A549 (cell line): ENCODE measurements at regions of chr2 and their contacts with region 1.

Region 1: GRCh38 chr2:117814417-117815264 is at the start of gene DDX18:
- DNase-seq: peak; percentile 50 to 98
- ATAC-seq: peak; percentile 99
- H3K4me3 ChIP-seq: peak within 1 kb of the TSS; percentile 85
- H3K27ac ChIP-seq: peak within 1 kb of the TSS; percentile 86 to 88
- H3K4me1 ChIP-seq: peaks cover 15% of the 10 kb centered on the region; the same call in 2 of the 3 replicates
- CTCF ChIP-seq: peak; percentile 99
- EP300 ChIP-seq: no peak
- POLR2A ChIP-seq: peak; percentile 75
- RAD21 ChIP-seq: peak; percentile 79 to 84
- polyA plus RNA-seq, gene DDX18: 106 and 115 TPM in 2 replicates

Region 2: DNA sequence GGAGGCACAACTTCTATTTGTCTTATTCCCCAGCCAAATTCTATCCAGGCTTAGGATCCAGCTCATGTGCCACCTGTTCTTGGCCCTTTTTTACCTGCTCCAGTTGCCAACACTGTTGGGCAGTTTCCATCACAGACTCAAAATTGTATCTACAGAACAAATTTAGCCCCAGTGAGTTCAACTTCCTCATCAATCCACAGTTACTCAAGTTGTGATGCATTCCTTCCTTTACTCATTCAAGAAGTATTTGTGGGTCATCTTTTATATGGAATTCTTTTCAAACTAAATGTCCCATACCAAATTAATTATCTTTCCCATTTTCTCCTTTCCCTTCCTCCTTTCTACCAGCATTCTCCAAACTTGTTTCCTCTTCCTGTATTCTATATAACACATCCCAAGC is 12.8 kb before region 1 on chr2:
- CTCF ChIA-PET with region 1: interaction called, 17 read pairs
- POLR2A ChIA-PET with region 1: no interaction called
- DNase-seq: no peak
- ATAC-seq: no peak
- H3K4me3 ChIP-seq: no peak overlapping the region
- H3K27ac ChIP-seq: no peak overlapping the region
- H3K4me1 ChIP-seq: no peaks in the 10 kb centered on the region
- CTCF ChIP-seq: no peak
- EP300 ChIP-seq: no peak
- POLR2A ChIP-seq: no peak
- RAD21 ChIP-seq: no peak

Region 3: GRCh38 chr2:117835990-117836760 is 21.5 kb after region 1 on chr2:
- CTCF ChIA-PET with region 1: interaction called, 37 read pairs
- POLR2A ChIA-PET with region 1: no interaction called
- DNase-seq: peak; percentile 34 to 42
- ATAC-seq: peak; percentile 79 to 89
- H3K4me3 ChIP-seq: no peak overlapping the region
- H3K27ac ChIP-seq: no peak overlapping the region
- H3K4me1 ChIP-seq: no peaks in the 10 kb centered on the region
- CTCF ChIP-seq: peak; percentile 58
- EP300 ChIP-seq: no peak
- POLR2A ChIP-seq: no peak
- RAD21 ChIP-seq: peak; percentile 59 to 64; a peak in 4 of 5 replicates

Region 4: GRCh38 chr2:117958186-117958585 is 143.5 kb after region 1 on chr2:
- CTCF ChIA-PET with region 1: interaction called, 10 read pairs
- POLR2A ChIA-PET with region 1: no interaction called
- DNase-seq: peak in 1 of 2 experiments; percentile 76
- ATAC-seq: peak; percentile 80 to 88
- H3K4me3 ChIP-seq: no peak overlapping the region
- H3K27ac ChIP-seq: peak overlapping the region in 1 of 2 experiments; percentile 67; a peak in 3 of 6 replicates
- H3K4me1 ChIP-seq: peaks cover 18% of the 10 kb centered on the region
- CTCF ChIP-seq: no peak
- EP300 ChIP-seq: peak; percentile 47 to 68; a peak in 2 of 5 replicates
- POLR2A ChIP-seq: no peak
- RAD21 ChIP-seq: 0 out of 5 replicates have a peak, but pooled peaks of 1 of the 2 experiments have one; percentile 28

Region 5: GRCh38 chr2:118013724-118014491 is 199.3 kb after region 1 on chr2 and contains the start of gene CCDC93:
- CTCF ChIA-PET with region 1: interaction called, 17 read pairs
- POLR2A ChIA-PET with region 1: interaction called, 5 read pairs
- DNase-seq: peak; percentile 79 to 95
- ATAC-seq: peak; percentile 91 to 93
- H3K4me3 ChIP-seq: peak within 1 kb of the TSS; percentile 97
- H3K27ac ChIP-seq: peak within 1 kb of the TSS; percentile 88 to 99
- H3K4me1 ChIP-seq: peaks cover 9% of the 10 kb centered on the region; the same call in 2 of the 3 replicates
- CTCF ChIP-seq: no peak
- EP300 ChIP-seq: no peak
- POLR2A ChIP-seq: peak; percentile 86
- RAD21 ChIP-seq: no peak
- polyA plus RNA-seq, gene CCDC93: 17.8 and 19.7 TPM in 2 replicates